ENCODE measurements at regions of chr22 and their contacts with region 1.

Region 1: DNA sequence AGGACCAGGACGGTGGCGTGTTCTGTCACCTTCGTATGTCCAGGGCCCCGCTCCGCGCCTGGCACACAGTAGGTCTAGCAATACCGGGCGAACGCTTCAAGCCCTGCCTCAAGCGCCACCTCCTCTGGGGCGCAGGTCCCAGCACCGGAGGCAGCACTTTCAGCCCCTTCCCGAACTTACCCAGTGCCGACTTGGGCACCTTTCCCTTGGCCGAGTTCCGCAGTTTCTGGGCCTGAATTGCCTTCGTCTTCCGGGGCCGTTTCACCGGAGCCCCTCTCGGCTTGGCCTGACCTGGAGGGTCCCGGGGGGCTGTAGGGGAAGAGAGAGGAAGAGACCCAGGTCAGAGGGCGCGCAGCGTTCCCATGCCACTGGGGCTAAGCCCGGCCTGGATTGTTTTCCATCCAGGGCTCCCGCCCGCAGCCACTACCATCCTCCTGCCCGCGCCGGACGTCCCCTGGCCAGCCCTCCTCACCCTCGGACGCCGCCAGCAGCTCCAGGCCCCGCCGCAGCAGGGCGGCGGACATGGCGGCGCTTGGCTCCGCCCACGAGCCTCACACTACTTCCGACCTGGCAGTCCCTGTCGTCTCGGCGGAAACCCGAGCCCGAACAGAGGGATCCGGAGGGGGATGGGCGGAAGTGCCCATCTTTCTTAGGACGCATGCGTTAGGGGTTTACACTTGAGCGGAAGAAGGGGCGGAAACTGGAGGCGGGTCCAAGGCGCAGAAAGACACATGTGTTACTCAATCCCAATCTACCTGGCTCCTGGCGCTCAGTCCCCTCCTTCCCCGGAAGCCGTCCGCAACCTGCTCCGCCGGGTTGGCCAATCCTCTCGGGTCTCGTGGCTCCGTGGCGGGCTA is at the start of gene RPS19BP1:
- DNase-seq: peak; percentile 92 to 100 (median 99)
- ATAC-seq: peak; percentile 89
- H3K4me3 ChIP-seq: peak within 1 kb of the TSS; percentile 92
- H3K4me3 Mint-ChIP-seq: peak within 1 kb of the TSS; percentile 92 to 98 (median 95)
- H3K27ac ChIP-seq: peak within 1 kb of the TSS; percentile 95
- H3K27ac Mint-ChIP-seq: peak within 1 kb of the TSS; percentile 85 to 98 (median 95)
- H3K4me1 ChIP-seq: peaks cover 39 to 53% of the 10 kb centered on the region in 2 donors
- H3K4me1 Mint-ChIP-seq: peaks cover 41 to 60% (median 52%) of the 10 kb centered on the region in 7 donors
- H3K27me3 ChIP-seq: no peaks in the 10 kb centered on the region
- H3K27me3 Mint-ChIP-seq: peaks cover 0 to 4% (median 0%) of the 10 kb centered on the region in 5 donors
- total RNA-seq, gene RPS19BP1: 35.2 to 67.4 (median 61.5) TPM

Region 2: DNA sequence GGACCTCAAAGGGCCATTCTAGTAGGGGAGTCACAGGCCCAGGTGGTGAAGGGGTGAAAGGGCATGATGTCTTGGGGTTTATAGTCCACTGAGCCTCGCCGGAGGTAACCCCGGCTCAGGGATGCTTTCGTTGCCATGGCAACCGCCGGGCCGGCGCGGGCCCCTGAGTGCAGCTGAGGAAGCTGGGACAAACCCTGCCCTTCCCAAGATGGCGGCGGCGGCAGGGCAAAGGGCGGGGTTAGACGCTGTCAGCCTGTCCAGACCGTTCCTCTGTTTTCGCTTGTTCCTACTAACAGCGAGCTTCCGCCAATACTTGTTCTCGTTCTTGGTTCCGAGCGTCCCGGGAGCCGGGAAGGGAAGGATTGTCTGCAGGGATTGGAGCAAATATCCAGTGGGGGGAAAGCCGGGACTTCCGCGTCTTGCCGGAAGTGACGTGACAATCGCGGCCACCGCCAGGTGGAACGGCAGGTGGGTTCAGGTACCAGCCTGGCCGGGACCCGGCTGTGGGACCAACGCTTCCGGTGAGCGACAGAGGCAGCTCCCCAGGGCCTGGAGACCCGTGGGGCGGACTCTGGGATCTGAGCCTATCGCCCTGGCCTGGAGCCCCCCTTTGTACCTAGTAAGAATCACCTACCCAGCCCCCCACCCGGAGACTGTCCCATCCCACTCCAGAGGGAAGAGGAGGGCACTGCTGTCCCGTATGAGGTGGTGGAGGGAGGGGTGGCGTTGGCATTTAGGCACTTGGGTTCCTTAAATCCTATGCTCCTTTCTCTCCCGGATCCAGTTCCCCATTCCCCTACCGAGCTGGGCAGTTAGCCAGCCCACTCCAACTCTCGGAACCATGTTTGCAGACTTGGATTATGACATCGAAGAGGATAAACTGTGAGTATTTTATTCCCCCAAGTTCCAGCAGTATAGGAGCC is 1475.2 kb before region 1 on chr22 and contains the start of gene PICK1:
- CTCF ChIA-PET with region 1: no interaction called
- POLR2A ChIA-PET with region 1: no interaction called
- intact Hi-C with region 1: loop called in 1 of 2 experiments (anchors 5 kb)
- DNase-seq: peak; percentile 68 to 84 (median 81)
- ATAC-seq: peak; percentile 86
- H3K4me3 ChIP-seq: peak within 1 kb of the TSS; percentile 80
- H3K4me3 Mint-ChIP-seq: peak within 1 kb of the TSS; percentile 80 to 97 (median 96)
- H3K27ac ChIP-seq: peak within 1 kb of the TSS; percentile 87
- H3K27ac Mint-ChIP-seq: peak within 1 kb of the TSS; percentile 94 to 99 (median 98)
- H3K4me1 ChIP-seq: peaks cover 12 to 15% of the 10 kb centered on the region in 2 donors
- H3K4me1 Mint-ChIP-seq: peaks cover 0 to 26% (median 21%) of the 10 kb centered on the region in 7 donors
- H3K27me3 ChIP-seq: no peaks in the 10 kb centered on the region
- H3K27me3 Mint-ChIP-seq: peaks cover 0 to 16% (median 0%) of the 10 kb centered on the region in 5 donors
- total RNA-seq, gene PICK1: 10.0 to 29.3 (median 26.5) TPM

Region 3: GRCh38 chr22:39343259-39344048 is 189.0 kb before region 1 on chr22:
- CTCF ChIA-PET with region 1: interaction called, 16 read pairs
- POLR2A ChIA-PET with region 1: interaction called, 5 read pairs
- intact Hi-C with region 1: loop called (anchors 1 kb)
- DNase-seq: peak; percentile 25 to 69 (median 59)
- ATAC-seq: peak; percentile 85
- H3K4me3 ChIP-seq: no peak overlapping the region
- H3K4me3 Mint-ChIP-seq: no peak overlapping the region
- H3K27ac ChIP-seq: no peak overlapping the region
- H3K27ac Mint-ChIP-seq: no peak overlapping the region
- H3K4me1 ChIP-seq: no peaks in the 10 kb centered on the region
- H3K4me1 Mint-ChIP-seq: peaks cover 5 to 9% (median 6%) of the 10 kb centered on the region in 7 donors
- H3K27me3 ChIP-seq: no peaks in the 10 kb centered on the region
- H3K27me3 Mint-ChIP-seq: peaks cover 0 to 41% (median 3%) of the 10 kb centered on the region in 5 donors

Region 4: GRCh38 chr22:39496131-39496838 is 36.2 kb before region 1 on chr22:
- CTCF ChIA-PET with region 1: interaction called, 120 read pairs
- POLR2A ChIA-PET with region 1: interaction called, 31 read pairs
- intact Hi-C with region 1: loop called (anchors 1 kb)
- DNase-seq: peak in 8 of 9 donors; percentile 31 to 62 (median 51)
- ATAC-seq: peak; percentile 79
- H3K4me3 ChIP-seq: no peak overlapping the region
- H3K4me3 Mint-ChIP-seq: no peak overlapping the region
- H3K27ac ChIP-seq: no peak overlapping the region
- H3K27ac Mint-ChIP-seq: peak overlapping the region in 4 of 9 donors; percentile 17 to 91 (median 28)
- H3K4me1 ChIP-seq: no peaks in the 10 kb centered on the region
- H3K4me1 Mint-ChIP-seq: peaks cover 9 to 22% (median 15%) of the 10 kb centered on the region in 7 donors
- H3K27me3 ChIP-seq: no peaks in the 10 kb centered on the region
- H3K27me3 Mint-ChIP-seq: peaks cover 0 to 7% (median 0%) of the 10 kb centered on the region in 5 donors

Region 5: DNA sequence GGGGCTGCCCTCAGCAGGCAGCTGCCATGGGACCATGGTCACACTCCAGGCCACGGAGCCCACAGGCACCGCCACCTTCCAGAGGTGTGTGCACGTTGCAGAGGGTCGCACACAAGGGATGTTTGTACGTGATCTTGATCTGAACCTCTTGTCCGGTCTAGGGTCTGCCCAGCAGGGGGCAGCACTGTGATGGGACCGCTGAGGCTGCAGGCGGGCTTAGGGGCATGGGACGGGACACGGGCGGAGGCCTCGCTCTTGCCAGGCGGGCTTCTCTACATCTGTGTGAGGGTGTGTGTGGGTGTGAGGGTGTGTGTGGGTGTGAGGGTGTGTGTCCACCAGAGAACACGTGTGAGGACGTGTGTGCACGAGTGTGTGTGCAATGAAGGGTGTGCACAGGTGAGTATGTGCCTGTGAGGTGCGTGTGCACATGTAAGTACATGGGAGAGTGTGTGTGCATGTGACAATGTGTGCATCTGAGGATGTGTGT is 90.5 kb after region 1 on chr22:
- CTCF ChIA-PET with region 1: no interaction called
- POLR2A ChIA-PET with region 1: no interaction called
- intact Hi-C with region 1: loop called in 1 of 2 experiments (anchors 1 kb)
- DNase-seq: peak; percentile 60 to 73 (median 68)
- ATAC-seq: peak; percentile 84
- H3K4me3 ChIP-seq: no peak overlapping the region
- H3K4me3 Mint-ChIP-seq: no peak overlapping the region
- H3K27ac ChIP-seq: no peak overlapping the region
- H3K27ac Mint-ChIP-seq: no peak overlapping the region
- H3K4me1 ChIP-seq: peaks cover 0 to 5% of the 10 kb centered on the region in 2 donors
- H3K4me1 Mint-ChIP-seq: peaks cover 6 to 18% (median 11%) of the 10 kb centered on the region in 7 donors
- H3K27me3 ChIP-seq: no peaks in the 10 kb centered on the region
- H3K27me3 Mint-ChIP-seq: peaks cover 0 to 11% (median 2%) of the 10 kb centered on the region in 5 donors

Region 6: DNA sequence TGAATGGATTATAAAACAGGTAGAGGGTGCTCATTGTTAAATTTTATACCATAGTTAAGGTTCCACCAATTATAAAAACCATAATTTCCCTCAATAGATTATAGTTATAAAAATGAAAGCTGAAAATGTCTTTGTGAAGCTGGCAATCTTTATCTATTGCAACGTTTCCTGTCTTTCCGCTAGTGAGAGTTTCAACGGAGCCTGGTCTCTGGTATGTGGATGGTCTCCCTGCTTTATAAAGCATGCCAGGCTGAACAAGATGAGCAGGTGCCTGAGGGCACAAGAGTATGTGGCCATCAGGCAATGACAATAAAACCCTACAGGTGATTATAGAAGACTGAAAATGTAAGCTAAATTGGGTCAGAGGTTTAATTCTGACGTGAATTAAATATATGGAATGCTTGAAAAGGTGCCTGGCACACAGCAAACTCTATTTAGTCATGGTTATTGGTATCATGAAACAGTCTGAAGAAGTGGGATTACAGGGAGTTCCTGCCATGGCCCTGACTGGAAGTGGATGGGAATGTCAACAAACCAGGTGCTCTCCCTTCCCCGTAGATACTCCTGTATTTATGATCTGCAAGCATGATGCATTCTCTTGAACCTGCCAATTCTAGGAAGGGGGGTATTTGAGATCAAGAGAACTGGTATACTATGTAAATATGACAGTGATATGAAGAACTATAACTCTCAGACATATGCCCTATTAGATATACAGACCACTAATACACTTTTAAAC is 245.4 kb after region 1 on chr22:
- CTCF ChIA-PET with region 1: no interaction called
- POLR2A ChIA-PET with region 1: no interaction called
- intact Hi-C with region 1: no loop called
- DNase-seq: peak in 1 of 9 donors; percentile 9
- ATAC-seq: no peak
- H3K4me3 ChIP-seq: no peak overlapping the region
- H3K4me3 Mint-ChIP-seq: peak overlapping the region in 6 of 10 donors; percentile 10 to 65 (median 52)
- H3K27ac ChIP-seq: no peak overlapping the region
- H3K27ac Mint-ChIP-seq: peak overlapping the region in 2 of 9 donors; percentile 6 to 14
- H3K4me1 ChIP-seq: peaks cover 7 to 24% of the 10 kb centered on the region in 2 donors
- H3K4me1 Mint-ChIP-seq: peaks cover 22 to 53% (median 48%) of the 10 kb centered on the region in 7 donors
- H3K27me3 ChIP-seq: no peaks in the 10 kb centered on the region
- H3K27me3 Mint-ChIP-seq: peaks cover 0 to 12% (median 0%) of the 10 kb centered on the region in 5 donors

Region 7: GRCh38 chr22:40036591-40037225 is 504.3 kb after region 1 on chr22:
- CTCF ChIA-PET with region 1: interaction called, 14 read pairs
- POLR2A ChIA-PET with region 1: interaction called, 3 read pairs
- intact Hi-C with region 1: loop called (anchors 1 kb)
- DNase-seq: peak in 7 of 9 donors; percentile 26 to 56 (median 48)
- ATAC-seq: peak; percentile 81
- H3K4me3 ChIP-seq: no peak overlapping the region
- H3K4me3 Mint-ChIP-seq: no peak overlapping the region
- H3K27ac ChIP-seq: no peak overlapping the region
- H3K27ac Mint-ChIP-seq: no peak overlapping the region
- H3K4me1 ChIP-seq: no peaks in the 10 kb centered on the region
- H3K4me1 Mint-ChIP-seq: peaks cover 0 to 7% (median 6%) of the 10 kb centered on the region in 7 donors
- H3K27me3 ChIP-seq: peaks cover 0 to 3% of the 10 kb centered on the region in 2 donors
- H3K27me3 Mint-ChIP-seq: peaks cover 3 to 25% (median 15%) of the 10 kb centered on the region in 5 donors

Region 8: GRCh38 chr22:40368016-40368415 is 835.6 kb after region 1 on chr22:
- CTCF ChIA-PET with region 1: no interaction called
- POLR2A ChIA-PET with region 1: no interaction called
- intact Hi-C with region 1: loop called in 1 of 2 experiments (anchors 1 kb)
- DNase-seq: no peak
- ATAC-seq: no peak
- H3K4me3 ChIP-seq: no peak overlapping the region
- H3K4me3 Mint-ChIP-seq: peak overlapping the region in 2 of 10 donors; percentile 17 to 33
- H3K27ac ChIP-seq: no peak overlapping the region
- H3K27ac Mint-ChIP-seq: peak overlapping the region in 1 of 9 donors; percentile 41
- H3K4me1 ChIP-seq: peaks cover 3 to 13% of the 10 kb centered on the region in 2 donors
- H3K4me1 Mint-ChIP-seq: peaks cover 12 to 23% (median 17%) of the 10 kb centered on the region in 7 donors
- H3K27me3 ChIP-seq: no peaks in the 10 kb centered on the region
- H3K27me3 Mint-ChIP-seq: no peaks in the 10 kb centered on the region